Dendritic cell treated with granulocyte-macrophage colony-stimulating factor and Interleukin-4, amounts not matched to agents 40 ng/mL and 50 ng/mL, for 4 days (primary cell): ENCODE measurements at regions of chr6 and their contacts with region 1.

Region 1: DNA sequence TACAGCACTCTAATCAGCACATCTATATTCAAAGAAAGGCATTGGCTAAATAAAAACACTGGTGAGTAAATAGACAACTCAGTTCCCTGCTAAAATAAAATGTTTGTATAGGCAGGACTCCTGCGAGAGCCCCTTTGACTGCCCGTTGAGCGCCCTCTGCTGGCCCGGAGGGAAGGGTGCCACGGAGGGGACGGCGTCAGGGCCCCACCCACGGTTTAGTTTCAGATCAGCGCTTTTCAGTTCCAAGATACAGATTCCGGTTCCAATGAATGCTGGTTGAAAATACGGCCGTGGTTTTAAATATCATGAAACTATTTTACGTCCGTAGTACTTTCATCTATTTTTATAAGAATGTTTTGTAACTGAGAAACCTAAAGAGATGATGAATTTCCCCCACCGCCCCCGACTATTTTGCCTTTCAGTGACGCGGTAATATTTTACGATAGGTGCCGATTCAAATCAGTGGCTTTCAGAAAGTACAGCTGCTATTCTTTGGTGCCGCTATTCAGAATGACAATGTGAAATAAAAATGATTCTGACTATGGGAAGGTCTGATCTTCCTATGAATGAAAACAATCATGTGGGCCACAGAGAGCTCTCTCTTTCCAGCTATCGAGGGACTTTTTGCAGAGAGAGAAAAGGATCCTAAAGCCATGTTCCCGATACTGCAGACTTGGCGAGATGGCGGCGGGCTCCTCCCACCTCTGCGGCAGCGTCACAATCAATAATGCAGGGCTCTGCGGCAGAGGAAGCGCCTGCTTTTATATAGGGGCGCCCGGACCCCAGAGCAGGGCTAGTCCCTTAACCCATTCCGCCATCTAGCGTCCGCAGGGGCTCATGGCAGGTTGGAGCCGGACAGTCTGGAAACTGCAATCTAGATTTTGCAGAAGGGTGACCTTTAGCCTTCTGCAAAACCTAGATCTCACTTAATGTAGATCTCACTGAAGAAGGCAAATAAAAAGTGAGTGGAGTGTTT is 10.6 kb upstream of the CCN6 start:
- H3K4me3 Mint-ChIP-seq: peak overlapping the region; percentile 76
- H3K27ac Mint-ChIP-seq: peak overlapping the region; percentile 92
- H3K4me1 Mint-ChIP-seq: peaks cover 10% of the 10 kb centered on the region
- H3K27me3 Mint-ChIP-seq: no peaks in the 10 kb centered on the region

Region 2: DNA sequence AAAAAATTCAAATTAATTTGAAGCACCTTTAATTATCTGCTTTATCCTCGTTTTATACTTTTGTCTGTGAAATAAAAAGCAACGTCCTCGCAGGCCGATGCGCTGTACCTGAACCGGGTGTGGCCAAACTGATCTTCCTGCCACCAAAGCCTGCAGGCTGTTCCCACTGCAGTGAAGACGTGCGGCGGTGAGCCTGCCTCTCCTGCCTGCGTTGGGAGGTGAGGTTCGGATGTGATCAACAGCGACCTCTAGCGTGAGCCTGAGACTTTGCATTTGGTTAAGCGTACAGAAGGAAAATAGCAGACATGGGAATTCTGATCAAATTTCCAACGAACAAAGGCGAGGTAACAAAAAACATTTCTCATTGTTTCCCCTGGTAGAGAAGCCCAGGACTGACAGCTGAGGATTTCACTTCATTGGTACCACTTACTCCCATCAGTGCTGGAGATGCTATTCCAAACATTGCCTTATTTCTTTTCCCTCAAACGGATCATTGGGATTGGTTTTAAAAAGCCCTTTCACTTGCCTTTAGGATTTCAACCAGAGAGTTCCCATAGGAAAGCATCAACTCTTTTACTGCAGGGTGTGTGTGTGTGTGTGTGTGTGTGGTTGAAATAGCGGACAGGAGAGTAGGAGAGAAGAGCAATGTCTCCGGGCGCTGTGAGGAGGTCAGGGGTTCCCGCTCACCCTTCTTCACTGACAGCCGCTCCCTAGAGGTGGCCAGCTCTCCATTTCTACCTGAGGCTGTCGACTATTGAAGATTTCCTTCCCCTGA is 46.1 kb before region 1 on chr6:
- intact Hi-C with region 1: loop called (anchors 5 kb)
- H3K4me3 Mint-ChIP-seq: no peak overlapping the region
- H3K27ac Mint-ChIP-seq: no peak overlapping the region
- H3K4me1 Mint-ChIP-seq: peaks cover 27% of the 10 kb centered on the region
- H3K27me3 Mint-ChIP-seq: peaks cover 2% of the 10 kb centered on the region